Transverse colon (tissue), 4 donors: ENCODE measurements at regions of chr9 and their contacts with region 1.

Region 1: GRCh38 chr9:13450723-13451122 is 171.2 kb upstream of the MPDZ start:
- DNase-seq: no peak
- H3K4me3 ChIP-seq: no peak overlapping the region
- H3K27ac ChIP-seq: no peak overlapping the region
- H3K4me1 ChIP-seq: no peaks in the 10 kb centered on the region
- H3K27me3 ChIP-seq: no peaks in the 10 kb centered on the region
- CTCF ChIP-seq: no peak
- EP300 ChIP-seq: no peak
- POLR2A ChIP-seq: no peak

Region 2: DNA sequence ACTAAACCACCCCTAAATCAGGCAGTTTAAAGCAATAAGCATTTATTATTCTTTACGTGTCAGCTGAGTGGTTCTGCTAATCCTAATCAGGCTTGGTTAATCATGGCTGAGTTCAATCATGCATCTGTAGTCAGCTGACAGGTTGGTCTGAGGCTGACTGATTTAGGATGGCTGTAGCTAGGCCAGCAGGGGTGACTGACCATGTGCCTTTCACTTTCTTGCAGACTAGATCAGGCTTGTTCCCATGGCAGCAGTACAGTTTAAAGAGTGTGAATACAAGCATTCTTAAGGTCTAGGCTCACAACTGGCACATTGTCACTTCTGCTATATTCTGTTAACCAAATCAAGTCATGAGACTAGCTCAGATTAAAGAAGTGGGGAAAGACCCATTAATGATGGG is 155.2 kb before region 1 on chr9:
- in situ Hi-C with region 1: no loop called
- intact Hi-C with region 1: no loop called
- DNase-seq: no peak
- H3K4me3 ChIP-seq: no peak overlapping the region
- H3K27ac ChIP-seq: no peak overlapping the region
- H3K4me1 ChIP-seq: no peaks in the 10 kb centered on the region
- H3K27me3 ChIP-seq: no peaks in the 10 kb centered on the region
- CTCF ChIP-seq: no peak
- EP300 ChIP-seq: no peak
- POLR2A ChIP-seq: no peak

Region 3: GRCh38 chr9:13500034-13500433 is 49.3 kb after region 1 on chr9:
- in situ Hi-C with region 1: no loop called
- intact Hi-C with region 1: loop called (anchors 1 kb)
- DNase-seq: no peak
- H3K4me3 ChIP-seq: no peak overlapping the region
- H3K27ac ChIP-seq: no peak overlapping the region
- H3K4me1 ChIP-seq: no peaks in the 10 kb centered on the region
- H3K27me3 ChIP-seq: no peaks in the 10 kb centered on the region
- CTCF ChIP-seq: no peak
- EP300 ChIP-seq: no peak
- POLR2A ChIP-seq: no peak

Region 4: DNA sequence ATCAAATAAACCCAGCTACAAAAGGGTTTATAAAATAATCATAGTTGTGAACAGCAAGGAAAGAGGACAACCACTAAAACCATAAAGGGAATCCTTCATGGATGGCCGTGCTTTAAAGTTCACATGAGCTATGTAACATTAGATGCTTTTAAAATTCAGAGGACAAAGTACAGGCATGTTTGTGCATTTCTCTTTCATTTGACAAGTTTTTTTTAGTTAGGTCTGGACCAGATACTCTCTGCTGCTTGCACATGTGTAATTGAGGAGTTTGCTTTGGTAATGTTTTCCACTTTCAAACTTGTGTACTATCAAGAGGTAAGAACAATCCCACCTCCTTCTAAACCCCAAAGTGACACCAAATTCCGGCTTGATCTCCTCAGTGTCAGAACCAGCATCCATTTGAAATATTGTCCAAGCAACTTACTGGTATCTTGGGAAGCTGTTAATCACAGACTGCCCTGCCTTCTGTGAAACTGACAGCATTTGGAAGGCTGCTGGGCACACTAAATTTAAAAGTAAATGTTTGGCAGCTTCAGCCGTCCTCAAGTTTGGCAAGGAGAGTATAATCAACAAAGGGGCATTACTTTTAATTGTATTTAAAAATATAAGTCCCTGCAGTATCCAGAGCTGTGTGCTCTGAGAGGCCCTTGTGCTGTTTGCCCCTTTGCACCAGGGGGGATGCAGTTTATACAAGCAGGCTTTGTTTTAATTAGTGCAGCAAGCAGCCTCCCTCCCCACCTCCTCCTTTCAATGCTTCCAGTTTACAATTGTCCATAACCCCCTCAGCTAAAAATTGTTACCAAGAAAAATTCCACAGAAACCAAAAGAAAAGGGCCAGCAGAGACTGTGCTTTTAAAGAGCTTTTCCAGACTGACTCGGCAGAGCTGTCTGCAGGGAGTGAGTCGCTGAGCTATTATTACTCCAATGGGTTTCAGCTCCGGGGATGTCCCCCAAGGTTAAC is 157.0 kb after region 1 on chr9:
- in situ Hi-C with region 1: no loop called
- intact Hi-C with region 1: no loop called
- DNase-seq: no peak
- H3K4me3 ChIP-seq: no peak overlapping the region
- H3K27ac ChIP-seq: peak overlapping the region in 2 of 4 donors; percentile 19 to 54
- H3K4me1 ChIP-seq: peaks cover 0 to 26% (median 10%) of the 10 kb centered on the region in 4 donors
- H3K27me3 ChIP-seq: no peaks in the 10 kb centered on the region
- CTCF ChIP-seq: no peak
- EP300 ChIP-seq: no peak
- POLR2A ChIP-seq: no peak